Ovary (tissue), 10 donors: ENCODE measurements at regions of chr17 and their contacts with region 1.

Region 1: GRCh38 chr17:39952680-39953470 is 9.9 kb upstream of the GSDMA start:
- DNase-seq: peak; percentile 96 to 99 (median 98)
- H3K4me3 ChIP-seq: peak overlapping the region; percentile 40
- H3K27ac ChIP-seq: peak overlapping the region in 1 of 2 donors; percentile 41
- H3K4me1 ChIP-seq: no peaks in the 10 kb centered on the region
- H3K27me3 ChIP-seq: no peaks in the 10 kb centered on the region
- CTCF ChIP-seq: no peak
- EP300 ChIP-seq: no peak
- POLR2A ChIP-seq: no peak

Region 2: DNA sequence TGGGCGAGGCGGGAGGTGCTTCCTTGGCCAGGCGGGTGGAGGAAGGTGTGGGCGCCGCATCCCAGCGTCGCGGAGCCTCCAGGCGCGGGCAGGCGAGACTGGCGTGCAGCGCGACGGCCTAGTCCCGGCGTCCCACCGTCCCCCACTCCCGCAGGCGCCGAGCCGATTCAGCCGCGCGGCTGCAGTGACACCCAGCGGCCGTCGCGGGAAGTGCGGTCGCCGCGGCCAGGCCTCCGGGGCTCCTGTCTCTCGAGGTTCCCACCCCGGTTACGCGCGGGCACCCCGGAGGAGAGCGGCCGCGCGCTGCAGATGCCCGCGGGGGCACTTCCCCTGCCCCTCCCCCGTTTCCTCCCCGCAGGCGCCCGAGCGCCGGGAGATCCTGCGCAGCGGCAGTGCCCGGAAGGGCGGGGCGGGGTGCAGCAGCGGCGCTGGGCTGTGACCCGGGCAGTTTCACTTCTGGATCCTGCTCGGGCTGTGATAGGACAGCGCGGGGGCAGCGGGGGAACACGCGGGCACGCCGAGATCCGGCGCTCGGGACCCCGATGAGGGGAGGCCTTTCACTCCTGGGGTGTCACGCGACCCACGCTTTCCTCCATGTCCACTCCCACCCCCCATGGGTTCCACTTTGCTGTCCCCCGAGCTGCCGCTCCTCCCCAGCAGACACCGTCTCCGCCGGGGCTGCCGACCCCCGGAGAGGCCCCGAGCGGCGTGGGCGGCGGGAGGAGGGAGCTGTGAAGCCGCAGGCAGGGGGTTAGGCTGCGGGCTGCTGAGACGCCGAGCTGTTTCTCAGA is 198.5 kb before region 1 on chr17:
- intact Hi-C with region 1: no loop called
- DNase-seq: peak; percentile 82 to 92 (median 88)
- H3K4me3 ChIP-seq: peak overlapping the region; percentile 83
- H3K27ac ChIP-seq: peak overlapping the region; percentile 61 to 93
- H3K4me1 ChIP-seq: no peaks in the 10 kb centered on the region
- H3K27me3 ChIP-seq: no peaks in the 10 kb centered on the region
- CTCF ChIP-seq: peak; percentile 95 to 98 (median 97)
- EP300 ChIP-seq: no peak
- POLR2A ChIP-seq: no peak

Region 3: DNA sequence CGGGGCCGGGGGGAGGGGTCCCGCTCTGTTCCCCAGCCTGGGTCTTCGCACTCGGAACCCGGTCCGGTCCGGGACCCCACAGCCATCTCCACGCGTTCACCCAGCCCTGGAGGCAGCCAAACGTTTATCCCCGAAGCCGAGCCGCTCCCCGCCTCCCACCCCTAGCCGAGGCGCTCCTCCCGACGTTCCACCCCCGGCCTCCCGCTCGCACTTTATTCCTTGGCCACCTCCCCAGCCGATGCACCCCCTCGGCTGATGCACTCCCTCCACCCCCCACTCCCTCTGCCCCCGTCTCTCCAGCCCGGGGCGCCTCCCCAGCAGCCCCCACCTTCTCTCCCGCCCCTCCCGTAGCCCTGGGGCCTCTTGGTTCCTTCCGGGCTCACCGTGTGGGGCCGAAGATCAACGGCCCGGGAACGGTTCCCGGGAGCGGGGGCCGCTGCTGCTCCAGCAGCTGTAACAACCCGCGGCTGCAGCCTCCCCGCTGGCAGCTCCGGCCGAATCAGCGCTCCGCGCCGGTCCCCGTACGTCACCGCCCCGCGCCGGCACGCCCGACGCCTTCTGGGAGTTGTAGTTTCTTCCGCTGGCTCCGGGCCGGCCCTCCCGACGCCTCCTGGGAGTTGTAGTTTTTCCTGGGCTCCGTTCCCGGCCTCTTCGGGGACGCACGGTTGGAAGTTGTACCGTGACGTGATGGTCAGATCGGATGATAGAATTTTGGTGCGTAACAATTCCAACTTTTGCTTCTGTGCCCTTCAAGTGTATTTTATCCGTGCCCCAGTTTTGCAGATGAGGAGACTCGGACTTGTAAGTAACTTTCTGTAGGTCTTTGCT is 25.6 kb before region 1 on chr17 and contains the starts of genes LRRC3C and ORMDL3:
- intact Hi-C with region 1: loop called in 1 of 4 experiments (anchors 2 kb)
- DNase-seq: peak; percentile 95 to 98 (median 96)
- H3K4me3 ChIP-seq: peak within 1 kb of the TSS; percentile 96
- H3K27ac ChIP-seq: peak within 1 kb of the TSS; percentile 79 to 89
- H3K4me1 ChIP-seq: peaks cover 6% of the 10 kb centered on the region
- H3K27me3 ChIP-seq: no peaks in the 10 kb centered on the region
- CTCF ChIP-seq: no peak
- EP300 ChIP-seq: no peak
- POLR2A ChIP-seq: no peak
- total RNA-seq, gene LRRC3C: 0.27 TPM in 1 of 7 donors, not detected in the others
- total RNA-seq, gene ORMDL3: 37.0 to 64.3 (median 52.2) TPM

Region 4: GRCh38 chr17:39980351-39981206 is 27.7 kb after region 1 on chr17 and contains the start of gene PSMD3:
- intact Hi-C with region 1: loop called in 1 of 4 experiments (anchors 1 kb)
- DNase-seq: peak; percentile 96 to 99 (median 98)
- H3K4me3 ChIP-seq: peak within 1 kb of the TSS; percentile 80
- H3K27ac ChIP-seq: peak within 1 kb of the TSS; percentile 42 to 65
- H3K4me1 ChIP-seq: peaks cover 1% of the 10 kb centered on the region
- H3K27me3 ChIP-seq: no peaks in the 10 kb centered on the region
- CTCF ChIP-seq: peak; percentile 75 to 96 (median 91)
- EP300 ChIP-seq: no peak
- POLR2A ChIP-seq: peak; percentile 93
- total RNA-seq, gene PSMD3: 48.2 to 88.4 (median 75.8) TPM

Region 5: GRCh38 chr17:40021451-40021971 is 68.6 kb after region 1 on chr17:
- intact Hi-C with region 1: no loop called
- DNase-seq: peak in 2 of 5 donors; percentile 43 to 59
- H3K4me3 ChIP-seq: no peak overlapping the region
- H3K27ac ChIP-seq: peak overlapping the region in 1 of 2 donors; percentile 41
- H3K4me1 ChIP-seq: peaks cover 23% of the 10 kb centered on the region
- H3K27me3 ChIP-seq: no peaks in the 10 kb centered on the region
- CTCF ChIP-seq: no peak
- EP300 ChIP-seq: no peak
- POLR2A ChIP-seq: no peak